Natural killer cell (primary cell): ENCODE measurements at regions of chrX and their contacts with region 1.

Region 1: DNA sequence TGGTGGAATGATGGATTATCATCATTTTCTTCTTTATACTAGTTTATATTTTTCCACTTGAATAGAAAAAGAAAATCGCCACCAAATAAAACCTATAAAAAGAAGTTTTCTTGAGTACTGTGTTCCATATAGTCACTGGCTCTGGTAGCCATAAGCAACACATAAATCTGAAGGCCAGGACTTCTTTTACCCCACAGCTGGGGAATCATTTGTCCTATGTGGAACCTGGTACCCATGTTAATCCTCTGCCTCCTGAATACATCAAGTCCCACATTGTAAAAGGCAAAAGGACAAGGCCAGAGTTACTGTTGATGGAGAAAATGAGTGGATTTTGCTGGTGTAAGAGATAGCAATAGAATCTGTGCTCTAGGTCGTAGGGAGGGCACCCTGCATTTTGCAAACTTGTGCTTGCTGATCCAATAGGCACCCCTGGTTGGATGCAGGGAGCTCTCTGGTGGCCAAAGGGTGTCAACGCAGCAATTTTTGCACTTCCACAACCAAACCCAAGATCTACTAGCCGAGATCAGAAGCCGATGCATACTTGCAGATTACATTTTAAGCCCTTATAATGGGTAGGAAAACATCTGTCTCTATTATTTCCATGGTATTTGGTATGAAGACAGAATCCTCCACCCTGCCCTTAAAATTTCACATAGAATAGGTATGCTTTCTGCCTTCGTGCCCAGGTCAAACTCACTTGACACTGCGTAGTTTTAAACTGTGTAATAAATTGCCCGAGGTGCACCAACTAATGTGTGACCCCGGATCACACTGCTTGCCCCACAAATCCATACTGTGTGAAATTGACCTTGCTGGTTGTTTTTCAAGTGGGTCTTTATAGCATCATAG is 146.2 kb upstream of the SCML1 start:
- DNase-seq: peak in 1 of 2 donors; percentile 33
- ATAC-seq: peak in 1 of 3 donors; percentile 48
- H3K4me3 ChIP-seq: no peak overlapping the region
- H3K4me3 Mint-ChIP-seq: no peak overlapping the region
- H3K27ac ChIP-seq: no peak overlapping the region
- H3K27ac Mint-ChIP-seq: no peak overlapping the region
- H3K4me1 ChIP-seq: no peaks in the 10 kb centered on the region
- H3K4me1 Mint-ChIP-seq: no peaks in the 10 kb centered on the region
- H3K27me3 ChIP-seq: no peaks in the 10 kb centered on the region
- H3K27me3 Mint-ChIP-seq: peaks cover 5 to 23% of the 10 kb centered on the region in 2 donors
- CTCF ChIP-seq: no peak

Region 2: DNA sequence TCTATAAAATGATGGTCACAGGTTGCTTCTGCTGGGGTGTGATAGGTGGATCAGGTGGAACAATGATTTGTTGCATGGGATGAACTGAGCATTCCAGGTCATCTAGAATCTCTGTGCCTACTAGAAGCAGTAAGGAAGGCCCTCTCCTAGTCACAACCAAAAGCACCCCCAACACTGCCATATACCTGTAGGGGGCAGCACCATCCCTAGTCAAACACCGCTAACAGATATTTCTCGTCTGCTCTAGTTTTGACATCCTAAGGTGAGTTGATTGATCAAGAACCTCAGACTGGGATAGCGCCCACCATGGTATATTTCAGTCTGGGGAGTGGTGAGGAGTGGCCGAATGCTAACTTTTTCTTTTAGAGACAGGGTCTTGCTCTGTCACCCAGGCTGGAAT is 55.9 kb before region 1 on chrX:
- intact Hi-C with region 1: loop called (anchors 2 kb)
- DNase-seq: peak in 1 of 2 donors; percentile 49
- ATAC-seq: no peak
- H3K4me3 ChIP-seq: no peak overlapping the region
- H3K4me3 Mint-ChIP-seq: no peak overlapping the region
- H3K27ac ChIP-seq: no peak overlapping the region
- H3K27ac Mint-ChIP-seq: no peak overlapping the region
- H3K4me1 ChIP-seq: no peaks in the 10 kb centered on the region
- H3K4me1 Mint-ChIP-seq: no peaks in the 10 kb centered on the region
- H3K27me3 ChIP-seq: no peaks in the 10 kb centered on the region
- H3K27me3 Mint-ChIP-seq: peaks cover 20 to 23% of the 10 kb centered on the region in 2 donors
- CTCF ChIP-seq: no peak

Region 3: GRCh38 chrX:17655211-17656034 is 64.3 kb after region 1 on chrX:
- intact Hi-C with region 1: no loop called
- DNase-seq: peak in 1 of 2 donors; percentile 3
- ATAC-seq: no peak
- H3K4me3 ChIP-seq: peak overlapping the region; percentile 13
- H3K4me3 Mint-ChIP-seq: peak overlapping the region; percentile 58
- H3K27ac ChIP-seq: no peak overlapping the region
- H3K27ac Mint-ChIP-seq: no peak overlapping the region
- H3K4me1 ChIP-seq: peaks cover 19% of the 10 kb centered on the region
- H3K4me1 Mint-ChIP-seq: peaks cover 11 to 14% of the 10 kb centered on the region in 2 donors
- H3K27me3 ChIP-seq: peaks cover 4% of the 10 kb centered on the region
- H3K27me3 Mint-ChIP-seq: peaks cover 14 to 36% of the 10 kb centered on the region in 2 donors
- CTCF ChIP-seq: no peak